ENCODE measurements at regions of chr9 and their contacts with region 1.

Region 1: GRCh38 chr9:130712564-130713285 is 19.1 kb downstream of the EXOSC2 start:
- DNase-seq: peak; percentile 96 to 99
- H3K4me3 ChIP-seq: peak overlapping the region; percentile 78 to 90
- H3K27ac ChIP-seq: peak overlapping the region; percentile 98 to 99
- H3K4me1 ChIP-seq: peaks cover 0 to 16% of the 10 kb centered on the region in 2 donors
- H3K27me3 ChIP-seq: no peaks in the 10 kb centered on the region
- CTCF ChIP-seq: no peak

Region 2: DNA sequence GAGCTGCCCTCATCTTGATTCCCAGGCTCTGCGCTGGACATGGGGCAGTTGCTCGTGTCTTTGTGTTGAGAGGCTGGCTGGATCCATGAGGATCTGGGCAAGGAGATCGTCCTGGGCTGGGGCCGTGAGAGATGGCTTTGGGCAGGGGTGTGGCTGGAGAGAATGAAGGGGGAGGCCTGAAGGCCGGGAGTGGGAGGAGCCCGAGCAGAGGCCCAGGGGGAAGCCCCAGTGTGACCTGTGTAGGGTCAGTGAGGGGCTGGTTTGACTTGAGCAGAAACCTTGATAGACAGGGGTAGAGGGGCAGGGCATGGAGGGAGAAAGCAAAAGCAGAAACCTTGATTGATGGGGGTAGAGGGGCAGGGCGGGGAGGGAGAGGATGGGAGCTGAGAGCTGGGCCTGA is 322.4 kb before region 1 on chr9:
- intact Hi-C with region 1: no loop called
- DNase-seq: no peak
- H3K4me3 ChIP-seq: no peak overlapping the region
- H3K27ac ChIP-seq: no peak overlapping the region
- H3K4me1 ChIP-seq: no peaks in the 10 kb centered on the region
- H3K27me3 ChIP-seq: no peaks in the 10 kb centered on the region
- CTCF ChIP-seq: no peak

Region 3: GRCh38 chr9:130578865-130579737 is 133.6 kb before region 1 on chr9 and contains the start of gene FUBP3:
- intact Hi-C with region 1: loop called (anchors 1 kb)
- DNase-seq: peak; percentile 68 to 96
- H3K4me3 ChIP-seq: peak within 1 kb of the TSS; percentile 67 to 99
- H3K27ac ChIP-seq: peak within 1 kb of the TSS; percentile 87 to 92
- H3K4me1 ChIP-seq: peaks cover 3 to 14% of the 10 kb centered on the region in 2 donors
- H3K27me3 ChIP-seq: no peaks in the 10 kb centered on the region
- CTCF ChIP-seq: no peak
- total RNA-seq, gene FUBP3: 14.5 TPM

Region 4: GRCh38 chr9:130693426-130694191 is 19.1 kb before region 1 on chr9 and contains the start of gene EXOSC2:
- intact Hi-C with region 1: loop called (anchors 1 kb)
- DNase-seq: peak; percentile 95 to 99
- H3K4me3 ChIP-seq: peak within 1 kb of the TSS; percentile 54 to 77
- H3K27ac ChIP-seq: peak within 1 kb of the TSS; percentile 15 to 37
- H3K4me1 ChIP-seq: peaks cover 0 to 14% of the 10 kb centered on the region in 2 donors
- H3K27me3 ChIP-seq: no peaks in the 10 kb centered on the region
- CTCF ChIP-seq: no peak
- total RNA-seq, gene EXOSC2: 20.6 TPM

Region 5: DNA sequence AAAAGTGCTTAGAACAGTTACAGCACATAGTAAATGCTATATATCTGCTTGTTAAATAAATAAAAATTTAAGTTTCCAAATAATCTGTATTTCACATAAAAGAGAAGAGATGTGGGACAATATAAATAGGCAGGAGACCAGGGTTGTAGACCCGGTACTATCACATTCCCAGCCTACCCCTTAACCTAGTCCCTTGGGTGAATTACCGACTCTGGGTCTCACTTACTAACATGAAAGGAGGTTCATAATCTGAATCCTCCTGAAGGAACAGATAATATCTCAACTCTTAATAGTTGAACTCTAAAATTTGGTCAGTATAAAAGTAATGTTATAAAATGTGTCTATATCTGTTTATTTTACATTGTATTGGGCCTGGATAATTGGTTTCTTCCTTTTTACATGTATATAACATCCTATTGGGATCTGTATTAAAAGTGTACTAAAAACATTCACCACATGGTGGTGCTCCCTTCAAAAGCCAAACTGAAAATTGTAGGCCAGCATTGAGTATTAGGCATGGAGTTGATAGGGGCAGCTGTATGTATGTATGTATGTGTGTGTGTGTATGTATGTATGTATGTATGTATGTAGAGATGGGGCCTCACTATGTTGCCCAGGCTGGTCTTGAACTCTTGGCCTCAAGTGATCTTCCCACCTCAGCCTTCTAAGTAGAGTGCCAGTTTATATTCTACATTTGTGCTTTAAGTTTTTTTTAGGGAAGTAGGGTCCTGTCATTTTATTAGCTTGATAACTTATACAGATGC is 58.1 kb after region 1 on chr9:
- intact Hi-C with region 1: loop called (anchors 5 kb)
- DNase-seq: no peak
- H3K4me3 ChIP-seq: no peak overlapping the region
- H3K27ac ChIP-seq: no peak overlapping the region
- H3K4me1 ChIP-seq: peaks cover 0 to 4% of the 10 kb centered on the region in 2 donors
- H3K27me3 ChIP-seq: no peaks in the 10 kb centered on the region
- CTCF ChIP-seq: peak; percentile 49 to 79 (median 71)

Region 6: GRCh38 chr9:130780865-130781504 is 68.3 kb after region 1 on chr9:
- intact Hi-C with region 1: no loop called
- DNase-seq: peak; percentile 53 to 92
- H3K4me3 ChIP-seq: peak overlapping the region; percentile 52 to 64
- H3K27ac ChIP-seq: peak overlapping the region; percentile 94 to 97
- H3K4me1 ChIP-seq: peaks cover 4 to 41% of the 10 kb centered on the region in 2 donors
- H3K27me3 ChIP-seq: no peaks in the 10 kb centered on the region
- CTCF ChIP-seq: no peak

Region 7: DNA sequence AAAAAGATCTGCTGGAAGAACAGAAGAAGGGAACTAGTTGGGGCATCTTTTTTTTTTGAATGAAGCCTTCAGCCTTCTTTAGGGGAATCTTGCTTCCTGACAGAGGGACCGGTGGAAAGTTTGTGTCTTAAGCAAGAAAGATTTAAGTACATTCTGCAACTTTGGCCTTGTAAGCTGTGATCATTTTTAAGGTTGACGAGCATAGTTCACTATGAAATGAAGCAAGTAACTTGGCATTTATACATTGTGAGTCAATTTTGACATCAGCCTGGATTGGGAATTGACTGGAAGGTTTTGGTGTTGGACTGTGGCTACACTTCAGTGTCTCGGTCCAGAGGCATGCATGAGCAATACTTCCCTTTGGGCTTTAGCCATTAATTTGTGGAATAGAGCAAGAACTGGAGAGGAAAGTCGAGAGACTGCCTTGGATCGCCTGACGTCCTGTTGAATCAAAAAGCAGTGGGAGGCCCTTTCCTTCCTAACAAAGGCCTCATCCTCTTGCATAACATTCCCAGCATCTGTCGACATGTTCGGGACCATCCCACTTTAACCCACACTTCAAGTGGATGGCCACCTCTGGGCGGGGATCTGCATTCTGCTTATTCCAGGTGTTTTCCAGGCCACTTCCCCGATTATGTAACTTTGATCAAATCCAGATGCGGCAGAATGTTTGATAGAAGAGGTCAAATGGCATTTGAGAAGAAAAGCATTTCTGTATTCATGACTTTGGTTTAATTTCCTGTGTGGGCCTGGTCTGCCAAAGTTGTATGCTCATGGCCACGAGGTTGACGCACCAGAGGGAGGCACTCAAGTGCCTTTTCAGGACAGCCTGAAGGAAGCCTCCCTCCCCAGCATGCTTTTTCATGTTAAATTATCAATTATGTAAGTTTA is 134.8 kb after region 1 on chr9:
- intact Hi-C with region 1: loop called (anchors 5 kb)
- DNase-seq: peak; percentile 53 to 93
- H3K4me3 ChIP-seq: peak overlapping the region; percentile 40 to 50
- H3K27ac ChIP-seq: peak overlapping the region; percentile 95 to 98
- H3K4me1 ChIP-seq: peaks cover 19 to 60% of the 10 kb centered on the region in 2 donors
- H3K27me3 ChIP-seq: no peaks in the 10 kb centered on the region
- CTCF ChIP-seq: peak in 2 of 3 experiments; percentile 26 to 29

Measured in ascending aorta (tissue), 2 donors.